MCF 10A (cell line): ENCODE measurements at regions of chr9 and their contacts with region 1.

Region 1: GRCh38 chr9:75088260-75088905 is at the start of gene OSTF1:
- DNase-seq: peak; percentile 95
- H3K4me3 Mint-ChIP-seq: peak within 1 kb of the TSS; percentile 99
- H3K27ac Mint-ChIP-seq: peak within 1 kb of the TSS; percentile 97
- H3K4me1 Mint-ChIP-seq: peaks cover 25% of the 10 kb centered on the region
- H3K27me3 Mint-ChIP-seq: no peaks in the 10 kb centered on the region
- CTCF ChIP-seq: no peak
- total RNA-seq, gene OSTF1: 18.3 and 21.1 TPM in 2 replicates

Region 2: DNA sequence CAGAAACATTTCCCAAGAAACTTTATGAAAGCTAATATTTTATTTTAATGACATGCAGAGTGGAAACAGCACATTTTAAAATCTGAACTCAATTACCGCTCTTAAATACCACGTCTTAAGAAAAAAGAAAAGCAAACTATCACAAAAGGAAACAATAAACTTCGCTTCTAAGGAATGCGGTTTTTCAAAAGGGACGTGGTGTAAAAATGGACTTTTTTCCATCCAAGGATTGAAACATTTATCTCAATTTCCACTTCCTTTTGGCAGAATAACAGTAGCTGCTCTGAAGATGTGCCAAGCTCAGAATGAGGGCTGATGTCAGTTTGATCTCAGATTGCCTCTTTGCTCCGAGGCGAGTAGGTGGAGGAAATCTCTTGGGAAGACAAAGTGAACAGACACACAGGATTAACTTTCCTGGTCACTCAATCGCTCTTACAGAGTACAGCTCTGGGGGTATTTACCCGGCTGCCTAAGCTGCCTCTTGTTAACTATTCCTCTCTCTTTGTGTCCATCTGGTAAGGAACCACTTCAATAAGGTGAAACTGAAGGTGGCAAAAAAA is 359.2 kb before region 1 on chr9:
- CTCF ChIA-PET with region 1: no interaction called
- POLR2A ChIA-PET with region 1: no interaction called
- intact Hi-C with region 1: no loop called
- DNase-seq: no peak
- H3K4me3 Mint-ChIP-seq: no peak overlapping the region
- H3K27ac Mint-ChIP-seq: no peak overlapping the region
- H3K4me1 Mint-ChIP-seq: no peaks in the 10 kb centered on the region
- H3K27me3 Mint-ChIP-seq: peaks cover 50% of the 10 kb centered on the region
- CTCF ChIP-seq: no peak

Region 3: GRCh38 chr9:74960563-74960962 is 127.8 kb before region 1 on chr9:
- CTCF ChIA-PET with region 1: no interaction called
- POLR2A ChIA-PET with region 1: no interaction called
- intact Hi-C with region 1: no loop called
- DNase-seq: peak; percentile 86
- H3K4me3 Mint-ChIP-seq: no peak overlapping the region
- H3K27ac Mint-ChIP-seq: no peak overlapping the region
- H3K4me1 Mint-ChIP-seq: no peaks in the 10 kb centered on the region
- H3K27me3 Mint-ChIP-seq: no peaks in the 10 kb centered on the region
- CTCF ChIP-seq: no peak

Region 4: DNA sequence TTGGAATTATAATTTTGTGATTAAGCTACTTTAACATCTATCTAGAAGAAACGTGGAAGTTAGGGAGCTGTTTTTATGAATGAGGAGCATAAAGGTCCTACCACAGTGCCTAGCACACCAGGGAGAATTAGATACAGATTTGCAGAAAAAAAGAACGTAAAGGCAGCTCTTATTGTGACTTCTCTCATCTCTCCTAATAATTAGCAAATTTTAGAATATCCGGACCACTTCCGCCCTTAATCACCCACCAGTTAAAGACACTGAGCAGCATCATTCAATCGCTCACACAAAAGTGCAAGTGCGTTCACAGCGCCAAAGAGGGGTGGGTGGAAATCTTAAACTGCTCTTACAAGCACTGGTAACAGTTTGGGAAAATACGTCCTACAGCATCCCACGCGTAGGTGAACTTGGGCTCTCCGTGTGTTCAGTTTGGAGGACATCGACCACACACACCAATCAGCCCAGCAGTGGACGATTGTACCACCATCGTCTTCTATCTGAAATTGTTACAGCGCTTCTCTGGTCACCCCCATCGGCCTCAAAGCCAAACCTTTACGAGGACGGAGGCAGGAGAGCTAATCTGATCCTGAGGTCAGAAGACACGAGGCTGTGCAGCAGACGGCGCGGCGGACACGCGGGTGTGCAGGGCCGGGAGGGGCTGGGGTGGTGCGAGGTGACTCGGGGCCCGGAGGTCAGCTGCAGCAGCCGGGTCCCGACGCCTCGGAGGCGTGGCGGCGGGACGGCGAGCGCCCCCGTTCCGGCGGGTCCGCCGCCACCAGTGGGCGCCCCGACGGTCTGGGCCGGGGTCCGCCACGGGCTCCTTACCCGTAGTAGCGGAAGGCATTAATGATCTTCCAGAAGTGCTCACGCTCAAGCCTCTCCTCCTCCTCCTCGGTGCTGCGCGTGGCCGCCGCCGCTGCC is 60.9 kb before region 1 on chr9:
- CTCF ChIA-PET with region 1: interaction called, 51 read pairs
- POLR2A ChIA-PET with region 1: interaction called, 121 read pairs
- intact Hi-C with region 1: no loop called
- DNase-seq: peak; percentile 50
- H3K4me3 Mint-ChIP-seq: peak overlapping the region; percentile 95
- H3K27ac Mint-ChIP-seq: peak overlapping the region; percentile 21
- H3K4me1 Mint-ChIP-seq: peaks cover 12% of the 10 kb centered on the region
- H3K27me3 Mint-ChIP-seq: no peaks in the 10 kb centered on the region
- CTCF ChIP-seq: no peak

Region 5: GRCh38 chr9:75071530-75072124 is 16.8 kb before region 1 on chr9:
- CTCF ChIA-PET with region 1: interaction called, 5 read pairs
- POLR2A ChIA-PET with region 1: interaction called, 21 read pairs
- intact Hi-C with region 1: no loop called
- DNase-seq: peak; percentile 81
- H3K4me3 Mint-ChIP-seq: no peak overlapping the region
- H3K27ac Mint-ChIP-seq: peak overlapping the region; percentile 77
- H3K4me1 Mint-ChIP-seq: peaks cover 13% of the 10 kb centered on the region
- H3K27me3 Mint-ChIP-seq: no peaks in the 10 kb centered on the region
- CTCF ChIP-seq: no peak

Region 6: DNA sequence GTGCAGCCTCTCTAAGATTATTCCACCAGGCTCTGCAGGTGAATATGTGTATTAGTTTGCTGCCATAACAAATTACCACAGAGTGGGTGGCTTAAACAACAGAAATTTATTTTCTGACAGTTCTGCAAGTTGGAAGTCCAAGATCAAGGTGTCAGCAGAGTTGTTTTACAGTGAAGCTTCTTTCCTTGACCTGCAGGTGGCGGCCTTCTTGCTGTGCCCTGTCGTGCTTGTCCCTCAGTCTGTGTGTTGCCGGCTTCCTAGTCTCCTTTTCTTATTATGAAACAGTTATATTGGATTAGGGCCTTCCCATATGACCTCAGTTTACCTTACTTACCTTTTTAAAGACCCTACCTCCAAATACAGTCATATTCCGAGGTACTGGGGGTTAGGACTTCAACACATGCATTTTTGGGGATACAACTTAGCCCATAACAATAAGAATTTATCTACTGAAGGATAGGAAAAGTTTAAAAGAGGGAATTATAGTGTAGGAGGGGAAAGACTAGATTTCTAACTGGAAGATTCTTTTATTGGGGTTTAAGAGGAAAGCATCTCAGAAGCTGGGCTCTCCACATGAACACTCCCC is 97.3 kb after region 1 on chr9:
- CTCF ChIA-PET with region 1: interaction called, 3 read pairs
- POLR2A ChIA-PET with region 1: interaction called, 5 read pairs
- intact Hi-C with region 1: loop called (anchors 5 kb)
- DNase-seq: peak; percentile 64
- H3K4me3 Mint-ChIP-seq: no peak overlapping the region
- H3K27ac Mint-ChIP-seq: no peak overlapping the region
- H3K4me1 Mint-ChIP-seq: peaks cover 5% of the 10 kb centered on the region
- H3K27me3 Mint-ChIP-seq: no peaks in the 10 kb centered on the region
- CTCF ChIP-seq: peak; percentile 54

Region 7: DNA sequence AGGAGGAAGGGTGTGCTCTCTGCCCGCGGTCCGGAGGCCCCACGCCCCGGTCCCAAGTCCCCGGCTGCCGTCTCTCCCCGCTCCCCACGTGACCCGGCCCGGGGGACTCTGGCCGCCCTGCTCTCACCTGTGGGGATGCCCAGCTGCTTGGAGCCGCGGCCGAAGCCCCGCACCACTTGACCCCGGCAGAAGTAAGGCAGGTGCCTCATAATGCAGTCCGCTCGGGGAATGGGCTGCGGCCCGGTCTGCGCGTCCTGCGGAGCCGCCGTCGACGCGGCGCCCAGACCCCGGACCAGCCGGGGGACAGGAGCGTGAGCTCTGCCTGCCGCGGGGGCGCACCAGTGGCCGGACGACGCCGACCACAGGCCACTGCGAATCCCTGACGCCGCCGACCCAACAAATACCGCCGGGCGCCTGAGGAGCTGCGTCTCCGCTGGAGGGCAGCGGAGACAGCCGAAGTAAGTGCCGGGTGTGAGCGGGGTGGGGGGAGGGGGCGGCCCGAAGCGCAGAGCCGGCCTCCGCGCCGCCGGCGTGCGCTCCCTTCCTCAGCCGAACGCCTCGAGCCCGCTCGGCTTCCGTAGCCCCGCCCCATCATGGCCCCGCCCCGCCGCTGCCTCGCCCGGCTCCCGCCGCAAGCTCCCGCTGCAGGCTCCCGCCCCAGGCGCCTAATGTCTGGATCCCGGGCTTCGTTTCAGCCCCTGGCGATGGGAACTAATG is 1305.7 kb after region 1 on chr9 and contains the start of gene RFK:
- CTCF ChIA-PET with region 1: no interaction called
- POLR2A ChIA-PET with region 1: interaction called, 3 read pairs
- intact Hi-C with region 1: loop called (anchors 5 kb)
- DNase-seq: peak; percentile 86
- H3K4me3 Mint-ChIP-seq: peak within 1 kb of the TSS; percentile 98
- H3K27ac Mint-ChIP-seq: peak within 1 kb of the TSS; percentile 97
- H3K4me1 Mint-ChIP-seq: peaks cover 6% of the 10 kb centered on the region
- H3K27me3 Mint-ChIP-seq: no peaks in the 10 kb centered on the region
- CTCF ChIP-seq: peak; percentile 14
- total RNA-seq, gene RFK: 22.6 and 27.0 TPM in 2 replicates